ENCODE measurements at regions of chr5 and their contacts with region 1.

Region 1: DNA sequence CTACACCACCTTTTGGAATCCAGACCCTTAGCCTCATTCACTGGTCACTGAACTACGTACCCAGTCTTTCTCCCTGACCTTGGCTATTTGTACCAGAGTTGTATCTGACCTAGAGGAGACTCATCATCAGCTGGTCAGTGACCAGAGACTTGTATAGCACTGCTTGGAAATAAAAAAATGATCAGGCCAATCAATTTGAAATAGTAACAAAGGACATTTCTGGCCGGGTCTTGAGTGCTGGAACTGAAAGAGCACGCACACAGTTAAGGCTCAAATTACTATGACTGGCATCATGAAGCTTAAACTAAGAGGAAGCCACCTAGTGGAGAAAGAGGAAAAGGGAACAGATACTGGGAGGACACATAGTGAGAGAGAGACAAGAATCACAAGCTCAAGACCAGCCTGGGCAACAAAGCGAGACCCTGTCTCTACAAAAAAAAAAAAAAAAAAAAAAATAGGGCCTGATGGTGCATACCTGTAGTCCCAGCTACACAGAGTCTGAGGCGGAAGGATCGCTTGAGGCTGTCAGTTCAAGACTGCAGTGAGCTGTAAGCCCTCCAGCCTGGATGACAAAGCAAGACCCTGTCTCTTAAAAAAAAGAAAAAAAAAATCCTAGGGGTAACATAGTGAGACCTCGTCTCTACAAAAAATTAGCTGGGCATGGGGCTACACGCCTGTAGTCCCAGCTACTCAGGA is 12.8 kb upstream of the SRP19 start:
- DNase-seq: peak; percentile 62
- H3K27ac ChIP-seq: no peak overlapping the region
- CTCF ChIP-seq: peak; percentile 76

Region 2: GRCh38 chr5:112820246-112820645 is 28.0 kb before region 1 on chr5:
- CTCF ChIA-PET with region 1: interaction called, 11 read pairs
- POLR2A ChIA-PET with region 1: no interaction called
- DNase-seq: no peak
- H3K27ac ChIP-seq: no peak overlapping the region
- CTCF ChIP-seq: no peak

Region 3: DNA sequence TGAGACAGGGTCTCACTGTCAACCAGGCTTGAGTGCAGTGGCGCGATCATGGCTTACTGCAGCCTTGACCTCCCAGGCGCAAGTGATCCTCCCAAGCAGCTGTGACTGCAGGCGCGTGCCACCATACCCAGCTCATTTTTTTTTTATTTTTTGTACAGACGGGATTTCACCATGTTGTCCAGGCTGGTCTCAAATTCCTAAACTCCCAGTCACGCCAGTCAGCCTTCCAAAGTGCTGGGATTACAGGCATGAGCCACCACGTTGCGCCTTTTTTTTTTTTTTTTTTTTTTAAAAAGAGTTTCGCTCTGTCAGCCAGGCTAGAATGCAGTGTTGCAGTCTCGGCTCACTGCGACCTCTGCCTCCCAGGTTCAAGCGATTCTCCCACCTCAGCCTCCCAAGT is 14.3 kb before region 1 on chr5:
- CTCF ChIA-PET with region 1: interaction called, 16 read pairs
- POLR2A ChIA-PET with region 1: no interaction called
- DNase-seq: no peak
- H3K27ac ChIP-seq: no peak overlapping the region
- CTCF ChIP-seq: no peak

Measured in RWPE1 (cell line).